GM12878 (cell line): ENCODE measurements at regions of chr19 and their contacts with region 1.

Region 1: GRCh38 chr19:7326105-7326877 is 22.4 kb upstream of the ARHGEF18 start:
- DNase-seq: no peak
- ATAC-seq: peak; percentile 52; the same call in 2 of the 3 replicates
- H3K4me3 ChIP-seq: no peak overlapping the region
- H3K27ac ChIP-seq: no peak overlapping the region
- H3K4me1 ChIP-seq: no peaks in the 10 kb centered on the region
- H3K27me3 ChIP-seq: no peaks in the 10 kb centered on the region
- CTCF ChIP-seq: peak; percentile 41 to 51 (median 42); a peak in 5 of 6 replicates
- EP300 ChIP-seq: no peak
- POLR2A ChIP-seq: no peak
- RAD21 ChIP-seq: peak; percentile 65

Region 2: GRCh38 chr19:7145494-7146485 is 180.5 kb before region 1 on chr19:
- CTCF ChIA-PET with region 1: interaction called, 37 read pairs
- POLR2A ChIA-PET with region 1: interaction called, 3 read pairs
- RAD21 ChIA-PET with region 1: interaction called, 7 read pairs
- SMC1A ChIA-PET with region 1: interaction called, 47 read pairs
- in situ Hi-C with region 1: no loop called
- intact Hi-C with region 1: no loop called
- DNase-seq: no peak
- ATAC-seq: no peak
- H3K4me3 ChIP-seq: no peak overlapping the region
- H3K27ac ChIP-seq: no peak overlapping the region
- H3K4me1 ChIP-seq: no peaks in the 10 kb centered on the region
- H3K27me3 ChIP-seq: no peaks in the 10 kb centered on the region
- CTCF ChIP-seq: no peak
- EP300 ChIP-seq: no peak
- POLR2A ChIP-seq: no peak
- RAD21 ChIP-seq: no peak

Region 3: GRCh38 chr19:7250951-7251893 is 75.1 kb before region 1 on chr19:
- CTCF ChIA-PET with region 1: interaction called, 3 read pairs
- POLR2A ChIA-PET with region 1: interaction called, 5 read pairs
- RAD21 ChIA-PET with region 1: interaction called, 3 read pairs
- SMC1A ChIA-PET with region 1: interaction called, 13 read pairs
- in situ Hi-C with region 1: no loop called
- intact Hi-C with region 1: no loop called
- DNase-seq: no peak
- ATAC-seq: peak; percentile 63
- H3K4me3 ChIP-seq: no peak overlapping the region
- H3K27ac ChIP-seq: peak overlapping the region; percentile 31; the same call in 1 of the 2 replicates
- H3K4me1 ChIP-seq: peaks cover 8% of the 10 kb centered on the region
- H3K27me3 ChIP-seq: no peaks in the 10 kb centered on the region
- CTCF ChIP-seq: no peak
- EP300 ChIP-seq: no peak
- POLR2A ChIP-seq: no peak
- RAD21 ChIP-seq: no peak

Region 4: GRCh38 chr19:7348587-7349230 is 22.4 kb after region 1 on chr19 and contains the start of gene ARHGEF18:
- CTCF ChIA-PET with region 1: interaction called, 23 read pairs
- POLR2A ChIA-PET with region 1: interaction called, 7 read pairs
- RAD21 ChIA-PET with region 1: interaction called, 15 read pairs
- SMC1A ChIA-PET with region 1: interaction called, 22 read pairs
- in situ Hi-C with region 1: no loop called
- intact Hi-C with region 1: no loop called
- DNase-seq: peak; percentile 59
- ATAC-seq: peak; percentile 60
- H3K4me3 ChIP-seq: peak within 1 kb of the TSS; percentile 43; the same call in 1 of the 2 replicates
- H3K27ac ChIP-seq: peak within 1 kb of the TSS; percentile 77
- H3K4me1 ChIP-seq: peaks cover 58% of the 10 kb centered on the region
- H3K27me3 ChIP-seq: no peaks in the 10 kb centered on the region
- CTCF ChIP-seq: no peak
- EP300 ChIP-seq: peak in 1 of 2 experiments; percentile 36; a peak in 1 of 4 replicates
- POLR2A ChIP-seq: peak; percentile 72; the same call in 1 of the 2 replicates
- RAD21 ChIP-seq: no peak
- polyA plus RNA-seq, gene ARHGEF18: 0.31 to 0.57 TPM

Region 5: DNA sequence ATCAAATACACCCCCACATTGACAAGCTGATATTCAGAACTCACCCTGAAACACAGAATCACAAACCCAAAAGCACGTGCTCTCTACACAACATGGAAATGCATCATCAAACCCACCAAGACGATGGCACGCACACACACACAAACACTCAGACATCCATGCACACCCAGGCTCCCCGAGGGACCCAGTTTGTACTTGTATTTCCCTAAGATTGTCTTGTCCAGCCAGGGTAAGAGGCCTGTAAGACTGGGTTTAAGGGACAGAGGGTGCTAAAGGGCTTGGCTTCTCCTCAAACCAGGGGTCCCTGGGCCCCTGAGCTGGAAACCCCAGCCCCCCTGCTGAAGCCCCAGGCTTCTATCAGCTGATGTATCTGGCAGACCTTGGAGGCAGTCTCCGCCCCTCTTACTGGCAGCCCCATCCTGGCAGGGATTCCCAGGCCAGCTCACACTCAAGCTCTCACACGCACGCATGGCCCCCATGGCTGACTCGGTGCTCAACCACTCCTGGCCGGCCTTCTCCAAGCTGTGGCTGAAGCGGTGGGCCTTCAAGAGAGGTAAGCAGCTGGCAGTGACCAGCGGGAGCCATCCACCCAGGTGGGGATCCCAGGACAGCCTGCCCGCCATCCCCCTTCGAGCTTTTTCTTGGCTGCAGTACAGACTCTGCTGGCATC is 29.0 kb after region 1 on chr19:
- CTCF ChIA-PET with region 1: interaction called, 23 read pairs
- POLR2A ChIA-PET with region 1: no interaction called
- RAD21 ChIA-PET with region 1: interaction called, 15 read pairs
- SMC1A ChIA-PET with region 1: interaction called, 14 read pairs
- in situ Hi-C with region 1: no loop called
- intact Hi-C with region 1: no loop called
- DNase-seq: no peak
- ATAC-seq: peak; percentile 10; the same call in 2 of the 3 replicates
- H3K4me3 ChIP-seq: no peak overlapping the region
- H3K27ac ChIP-seq: no peak overlapping the region
- H3K4me1 ChIP-seq: peaks cover 11% of the 10 kb centered on the region
- H3K27me3 ChIP-seq: no peaks in the 10 kb centered on the region
- CTCF ChIP-seq: no peak
- EP300 ChIP-seq: no peak
- POLR2A ChIP-seq: no peak
- RAD21 ChIP-seq: no peak

Region 6: DNA sequence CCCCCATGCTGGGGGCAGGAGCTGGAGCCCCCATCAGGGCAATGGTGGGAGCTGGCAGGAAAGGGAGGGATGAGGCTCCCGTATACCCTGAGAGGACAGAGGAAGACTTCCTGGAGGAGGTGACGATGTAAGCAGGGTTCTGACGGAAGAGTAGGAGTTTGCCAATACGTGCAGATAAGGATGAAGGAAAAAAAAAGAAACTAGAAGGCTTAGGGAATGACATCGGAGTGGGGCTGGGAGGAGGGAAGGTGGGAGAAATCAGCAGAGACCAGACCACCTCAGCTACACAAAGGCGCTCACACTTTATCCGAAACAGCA is 54.7 kb after region 1 on chr19:
- CTCF ChIA-PET with region 1: interaction called, 15 read pairs
- POLR2A ChIA-PET with region 1: interaction called, 5 read pairs
- RAD21 ChIA-PET with region 1: interaction called, 8 read pairs
- SMC1A ChIA-PET with region 1: interaction called, 4 read pairs
- in situ Hi-C with region 1: no loop called
- intact Hi-C with region 1: no loop called
- DNase-seq: no peak
- ATAC-seq: no peak
- H3K4me3 ChIP-seq: no peak overlapping the region
- H3K27ac ChIP-seq: no peak overlapping the region
- H3K4me1 ChIP-seq: 0 out of 2 replicates have a peak, but pooled peaks cover under 1% of the 10 kb centered on the region
- H3K27me3 ChIP-seq: no peaks in the 10 kb centered on the region
- CTCF ChIP-seq: no peak
- EP300 ChIP-seq: no peak
- POLR2A ChIP-seq: no peak
- RAD21 ChIP-seq: no peak